ENCODE measurements at regions of chr18 and their contacts with region 1.

Region 1: DNA sequence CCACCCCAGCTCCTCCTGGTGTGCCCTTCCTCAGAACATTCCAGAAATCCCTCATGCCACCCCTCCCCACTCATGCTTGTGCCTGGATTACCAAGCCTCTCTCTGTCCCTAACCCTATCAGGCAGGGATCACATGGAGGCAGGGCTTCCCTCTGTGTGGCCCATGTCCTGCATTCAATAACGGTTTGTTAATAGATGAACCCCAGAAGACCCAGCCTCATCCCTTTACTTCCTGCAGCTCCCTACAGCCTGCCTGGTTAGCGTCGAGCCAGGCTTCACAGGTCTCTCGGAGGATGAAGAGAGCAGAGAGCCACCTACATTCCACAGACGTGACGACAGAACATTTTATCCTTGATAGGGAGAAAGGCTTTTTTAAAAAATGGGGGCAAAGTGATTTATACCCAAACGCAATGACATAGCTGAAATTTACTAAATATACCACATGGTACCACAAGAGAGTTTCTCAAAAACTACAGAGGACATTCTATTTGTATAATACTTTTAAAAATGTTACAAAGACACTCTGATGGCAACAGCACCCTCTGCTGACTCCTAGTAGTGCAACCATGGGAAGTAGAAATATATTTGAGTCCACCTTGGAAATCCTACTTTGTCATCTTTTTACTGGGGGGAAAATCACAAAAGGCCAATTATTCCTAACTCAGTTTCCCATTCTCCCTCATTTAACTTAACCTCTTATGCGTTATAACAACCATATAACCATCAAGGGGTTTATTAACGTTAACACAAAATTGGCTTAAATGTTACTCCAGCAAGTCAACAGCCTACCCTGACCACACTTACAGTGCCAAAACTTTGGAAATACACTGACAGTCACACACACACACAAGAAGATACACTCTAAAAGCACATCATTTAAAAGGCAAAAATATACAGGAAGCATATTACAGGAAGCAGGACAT is 30.7 kb downstream of the FBXO15 start:
- DNase-seq: peak; percentile 41
- H3K4me3 Mint-ChIP-seq: no peak overlapping the region
- H3K27ac Mint-ChIP-seq: no peak overlapping the region
- H3K4me1 Mint-ChIP-seq: no peaks in the 10 kb centered on the region
- H3K27me3 Mint-ChIP-seq: peaks cover 13% of the 10 kb centered on the region
- CTCF ChIP-seq: peak; percentile 70

Region 2: GRCh38 chr18:72700961-72701718 is 1415.8 kb before region 1 on chr18:
- CTCF ChIA-PET with region 1: no interaction called
- intact Hi-C with region 1: loop called (anchors 1 kb)
- DNase-seq: no peak
- H3K4me3 Mint-ChIP-seq: no peak overlapping the region
- H3K27ac Mint-ChIP-seq: no peak overlapping the region
- H3K4me1 Mint-ChIP-seq: no peaks in the 10 kb centered on the region
- H3K27me3 Mint-ChIP-seq: no peaks in the 10 kb centered on the region
- CTCF ChIP-seq: peak; percentile 54

Region 3: GRCh38 chr18:72762515-72763122 is 1354.3 kb before region 1 on chr18:
- CTCF ChIA-PET with region 1: no interaction called
- intact Hi-C with region 1: loop called (anchors 2 kb)
- DNase-seq: peak; percentile 32
- H3K4me3 Mint-ChIP-seq: no peak overlapping the region
- H3K27ac Mint-ChIP-seq: no peak overlapping the region
- H3K4me1 Mint-ChIP-seq: no peaks in the 10 kb centered on the region
- H3K27me3 Mint-ChIP-seq: no peaks in the 10 kb centered on the region
- CTCF ChIP-seq: peak; percentile 69

Region 4: DNA sequence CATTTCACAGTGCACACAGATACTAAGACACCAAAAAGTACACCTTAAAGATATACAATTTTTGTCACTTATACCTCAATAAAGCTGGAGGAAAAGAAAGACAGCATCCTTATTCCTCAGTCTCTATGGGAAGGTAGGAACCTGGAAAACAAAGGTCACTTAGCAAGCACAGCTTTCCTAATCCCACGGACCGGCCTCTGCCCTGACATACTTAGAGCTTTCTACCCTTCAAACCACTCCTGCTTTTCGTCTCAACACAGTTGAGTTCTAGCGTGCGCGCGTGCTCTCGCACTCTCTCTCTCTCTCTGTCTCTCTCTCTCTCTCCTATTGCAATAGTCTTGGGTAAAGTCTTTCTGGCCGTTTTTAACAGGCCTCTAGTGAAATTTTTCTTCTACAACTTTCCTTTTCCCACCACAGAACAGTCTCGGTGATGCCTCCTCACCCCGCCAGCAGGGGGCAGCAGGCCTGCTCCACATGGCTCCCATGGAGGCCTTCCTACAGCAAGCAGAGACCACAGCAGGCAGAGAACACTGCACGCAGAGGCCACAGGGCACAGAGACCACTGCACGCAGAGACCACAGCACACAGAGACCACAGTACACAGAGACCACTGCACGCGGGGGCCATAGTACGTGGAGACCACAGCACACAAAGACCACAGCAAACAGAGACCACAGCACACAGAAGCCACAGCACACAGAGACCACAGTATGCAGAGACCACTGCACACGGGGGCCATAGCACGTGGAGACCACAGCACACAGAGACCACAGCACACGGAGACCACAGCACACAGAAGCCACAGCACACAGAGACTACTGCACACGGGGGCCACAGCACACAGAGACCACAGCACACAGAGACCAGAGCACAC is 76.2 kb before region 1 on chr18:
- CTCF ChIA-PET with region 1: no interaction called
- intact Hi-C with region 1: loop called (anchors 1 kb)
- DNase-seq: peak; percentile 78
- H3K4me3 Mint-ChIP-seq: no peak overlapping the region
- H3K27ac Mint-ChIP-seq: no peak overlapping the region
- H3K4me1 Mint-ChIP-seq: no peaks in the 10 kb centered on the region
- H3K27me3 Mint-ChIP-seq: peaks cover 5% of the 10 kb centered on the region
- CTCF ChIP-seq: peak; percentile 73

Measured in Calu3 (cell line).